CD8-positive, alpha-beta T cell (primary cell): ENCODE measurements at regions of chr10 and their contacts with region 1.

Region 1: GRCh38 chr10:26448706-26449435 is 10.7 kb downstream of the APBB1IP start:
- DNase-seq: peak; percentile 55 to 95 (median 76)
- ATAC-seq: peak; percentile 72
- H3K4me3 ChIP-seq: peak overlapping the region; percentile 23 to 31
- H3K4me3 Mint-ChIP-seq: peak overlapping the region; percentile 81
- H3K27ac ChIP-seq: peak overlapping the region; percentile 82 to 92
- H3K27ac Mint-ChIP-seq: peak overlapping the region; percentile 99
- H3K4me1 ChIP-seq: peaks cover 82% of the 10 kb centered on the region
- H3K4me1 Mint-ChIP-seq: peaks cover 93% of the 10 kb centered on the region
- H3K27me3 ChIP-seq: no peaks in the 10 kb centered on the region
- H3K27me3 Mint-ChIP-seq: no peaks in the 10 kb centered on the region
- CTCF ChIP-seq: no peak

Region 2: GRCh38 chr10:26046069-26046710 is 402.7 kb before region 1 on chr10:
- CTCF ChIA-PET with region 1: no interaction called
- POLR2A ChIA-PET with region 1: no interaction called
- intact Hi-C with region 1: no loop called
- DNase-seq: no peak
- ATAC-seq: no peak
- H3K4me3 ChIP-seq: no peak overlapping the region
- H3K4me3 Mint-ChIP-seq: no peak overlapping the region
- H3K27ac ChIP-seq: no peak overlapping the region
- H3K27ac Mint-ChIP-seq: no peak overlapping the region
- H3K4me1 ChIP-seq: no peaks in the 10 kb centered on the region
- H3K4me1 Mint-ChIP-seq: no peaks in the 10 kb centered on the region
- H3K27me3 ChIP-seq: no peaks in the 10 kb centered on the region
- H3K27me3 Mint-ChIP-seq: peaks cover 6% of the 10 kb centered on the region
- CTCF ChIP-seq: no peak

Region 3: DNA sequence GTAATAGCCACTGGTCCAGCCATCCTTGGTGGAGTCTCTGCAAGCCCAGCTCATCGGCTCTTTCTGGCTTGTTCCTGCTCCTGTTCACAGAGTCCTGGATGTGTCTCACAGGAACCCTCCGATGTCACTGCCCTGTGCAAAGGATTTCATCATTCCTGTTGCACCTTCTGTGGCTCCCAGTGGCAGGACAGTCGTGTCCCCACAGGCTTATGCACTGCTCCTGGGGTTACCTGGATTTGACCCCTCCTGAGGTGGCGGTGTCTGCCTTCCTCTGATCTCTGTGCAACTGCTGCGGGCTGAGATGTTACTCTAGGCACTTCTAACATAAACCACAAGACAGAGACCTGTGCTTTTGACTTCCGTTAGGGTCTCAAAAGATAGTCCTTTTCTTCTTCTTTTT is 19.8 kb after region 1 on chr10:
- CTCF ChIA-PET with region 1: interaction called, 5 read pairs
- POLR2A ChIA-PET with region 1: interaction called, 10 read pairs
- intact Hi-C with region 1: loop called (anchors 1 to 2 kb)
- DNase-seq: peak in 8 of 9 experiments; percentile 28 to 86 (median 69)
- ATAC-seq: peak; percentile 81
- H3K4me3 ChIP-seq: peak overlapping the region in 1 of 2 experiments; percentile 7
- H3K4me3 Mint-ChIP-seq: peak overlapping the region; percentile 72
- H3K27ac ChIP-seq: peak overlapping the region; percentile 6 to 47
- H3K27ac Mint-ChIP-seq: peak overlapping the region; percentile 91
- H3K4me1 ChIP-seq: peaks cover 94% of the 10 kb centered on the region
- H3K4me1 Mint-ChIP-seq: peaks cover 89% of the 10 kb centered on the region
- H3K27me3 ChIP-seq: no peaks in the 10 kb centered on the region
- H3K27me3 Mint-ChIP-seq: no peaks in the 10 kb centered on the region
- CTCF ChIP-seq: no peak

Region 4: DNA sequence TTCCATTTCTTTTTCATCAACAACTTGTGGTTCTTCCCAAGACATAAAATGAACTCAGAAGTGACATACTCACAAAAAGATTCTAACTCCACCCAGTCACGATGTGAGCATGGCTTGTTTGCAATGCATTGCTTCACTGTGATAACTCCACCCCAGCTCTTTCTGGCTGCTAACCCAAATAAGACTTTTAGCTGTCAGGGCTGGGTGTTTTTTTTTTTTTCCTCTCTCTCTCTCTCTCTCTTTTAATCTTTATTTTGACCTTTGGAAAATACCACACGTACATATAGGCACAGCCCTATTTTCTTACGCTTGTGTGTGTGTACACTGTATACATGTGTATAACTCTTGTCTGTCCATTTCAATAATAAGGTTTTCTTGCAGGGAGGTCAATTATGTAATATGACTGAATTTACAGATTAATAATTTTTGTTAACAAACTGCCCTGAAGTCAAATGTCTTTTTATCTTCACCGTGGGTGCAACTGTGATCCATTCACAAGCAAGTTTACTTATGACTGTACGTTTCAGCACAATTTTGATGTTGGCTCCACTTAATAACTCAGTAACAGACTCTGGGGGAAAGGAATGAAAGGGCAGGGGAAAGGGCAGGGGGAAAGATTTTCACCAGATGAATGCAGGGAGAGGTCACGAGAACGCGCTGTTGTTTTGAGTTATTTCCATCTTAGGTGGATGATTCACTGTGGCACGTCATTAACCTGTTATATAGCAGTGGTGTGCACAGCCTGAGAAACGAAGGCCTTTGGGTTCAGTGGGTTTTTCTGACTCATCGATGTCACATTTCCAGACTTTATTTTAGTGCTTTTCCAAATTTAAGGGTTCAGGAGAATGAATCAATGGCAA is 38.4 kb after region 1 on chr10:
- CTCF ChIA-PET with region 1: no interaction called
- POLR2A ChIA-PET with region 1: interaction called, 5 read pairs
- intact Hi-C with region 1: loop called (anchors 1 to 2 kb)
- DNase-seq: peak; percentile 16 to 92 (median 69)
- ATAC-seq: peak; percentile 75
- H3K4me3 ChIP-seq: peak overlapping the region in 1 of 2 experiments; percentile 2
- H3K4me3 Mint-ChIP-seq: peak overlapping the region; percentile 66
- H3K27ac ChIP-seq: peak overlapping the region; percentile 73 to 91
- H3K27ac Mint-ChIP-seq: peak overlapping the region; percentile 97
- H3K4me1 ChIP-seq: peaks cover 66% of the 10 kb centered on the region
- H3K4me1 Mint-ChIP-seq: peaks cover 71% of the 10 kb centered on the region
- H3K27me3 ChIP-seq: no peaks in the 10 kb centered on the region
- H3K27me3 Mint-ChIP-seq: no peaks in the 10 kb centered on the region
- CTCF ChIP-seq: no peak

Region 5: DNA sequence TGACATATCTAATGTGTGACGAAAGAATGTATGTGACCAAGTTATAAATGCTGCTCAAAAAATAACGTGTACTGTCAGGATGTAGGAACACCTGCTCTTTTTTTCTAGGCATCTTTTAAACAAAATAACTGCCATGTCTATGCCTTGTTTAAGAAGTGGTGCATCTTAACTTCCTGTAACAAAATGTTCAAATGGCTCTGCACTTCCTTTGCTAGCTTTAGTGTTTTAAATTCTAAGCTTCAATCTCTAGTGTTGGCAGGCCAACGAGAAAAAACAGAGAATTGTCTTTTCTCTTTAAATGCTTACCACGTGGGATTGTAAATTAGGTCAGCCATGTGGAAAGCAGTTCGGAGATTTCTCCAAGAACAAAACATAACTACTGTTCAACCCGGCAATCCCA is 234.1 kb after region 1 on chr10:
- CTCF ChIA-PET with region 1: no interaction called
- POLR2A ChIA-PET with region 1: no interaction called
- intact Hi-C with region 1: loop called in 1 of 2 experiments (anchors 10 kb)
- DNase-seq: peak in 2 of 9 experiments; percentile 52 to 74
- ATAC-seq: peak; percentile 82
- H3K4me3 ChIP-seq: peak overlapping the region in 1 of 2 experiments; percentile 22
- H3K4me3 Mint-ChIP-seq: peak overlapping the region; percentile 35
- H3K27ac ChIP-seq: peak overlapping the region; percentile 56 to 61
- H3K27ac Mint-ChIP-seq: peak overlapping the region; percentile 92
- H3K4me1 ChIP-seq: peaks cover 36% of the 10 kb centered on the region
- H3K4me1 Mint-ChIP-seq: peaks cover 37% of the 10 kb centered on the region
- H3K27me3 ChIP-seq: no peaks in the 10 kb centered on the region
- H3K27me3 Mint-ChIP-seq: no peaks in the 10 kb centered on the region
- CTCF ChIP-seq: no peak

Region 6: DNA sequence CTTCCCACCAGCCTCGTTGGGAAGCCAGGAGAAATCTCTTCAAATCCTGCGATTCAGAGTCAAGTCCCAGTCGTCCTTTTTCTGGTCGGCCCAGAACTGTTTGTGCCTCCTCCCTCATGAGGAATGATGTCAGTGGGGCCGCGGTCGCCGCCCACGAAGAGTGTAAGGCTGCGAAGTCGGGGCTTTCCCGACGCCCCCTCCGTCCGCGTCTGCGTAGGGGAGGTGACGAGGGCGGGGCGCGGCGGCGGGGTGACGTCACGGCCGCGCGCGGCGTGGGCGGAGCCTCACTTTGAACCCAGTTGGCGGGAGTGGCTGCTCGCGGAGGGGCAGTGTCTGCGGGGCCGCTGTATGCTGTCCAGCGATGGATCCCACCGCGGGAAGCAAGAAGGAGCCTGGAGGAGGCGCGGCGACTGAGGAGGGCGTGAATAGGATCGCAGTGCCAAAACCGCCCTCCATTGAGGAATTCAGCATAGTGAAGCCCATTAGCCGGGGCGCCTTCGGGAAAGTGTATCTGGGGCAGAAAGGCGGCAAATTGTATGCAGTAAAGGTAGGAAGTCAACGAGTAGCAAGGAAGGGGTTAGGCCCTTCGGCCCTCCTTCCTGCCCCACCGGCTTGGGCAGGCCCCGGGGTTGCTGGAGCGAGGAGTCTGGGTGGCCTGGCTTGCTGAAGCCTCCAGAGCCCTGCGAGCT is 706.3 kb after region 1 on chr10 and contains the start of gene MASTL:
- CTCF ChIA-PET with region 1: no interaction called
- POLR2A ChIA-PET with region 1: no interaction called
- intact Hi-C with region 1: loop called in 1 of 2 experiments (anchors 5 kb)
- DNase-seq: peak; percentile 90 to 98 (median 93)
- ATAC-seq: peak; percentile 82
- H3K4me3 ChIP-seq: peak within 1 kb of the TSS; percentile 84 to 98
- H3K4me3 Mint-ChIP-seq: peak within 1 kb of the TSS; percentile 99
- H3K27ac ChIP-seq: peak within 1 kb of the TSS; percentile 100
- H3K27ac Mint-ChIP-seq: peak within 1 kb of the TSS; percentile 100
- H3K4me1 ChIP-seq: peaks cover 27% of the 10 kb centered on the region
- H3K4me1 Mint-ChIP-seq: peaks cover 49% of the 10 kb centered on the region
- H3K27me3 ChIP-seq: no peaks in the 10 kb centered on the region
- H3K27me3 Mint-ChIP-seq: no peaks in the 10 kb centered on the region
- CTCF ChIP-seq: no peak
- total RNA-seq, gene MASTL: 33.4 to 33.6 TPM